ENCODE measurements at regions of chr14 and their contacts with region 1.

Region 1: GRCh38 chr14:88584451-88584850 is 21.6 kb downstream of the ZC3H14 start:
- DNase-seq: no peak
- CTCF ChIP-seq: no peak

Region 2: GRCh38 chr14:88599761-88600439 is 15.4 kb after region 1 on chr14:
- CTCF ChIA-PET with region 1: interaction called, 13 read pairs
- POLR2A ChIA-PET with region 1: no interaction called
- DNase-seq: peak; percentile 73
- CTCF ChIP-seq: no peak

Measured in GM10248 (cell line).